Activated B cell treated with CpG ODN at 0.5 μM for 24 hours (primary cell): ENCODE measurements at regions of chr6 and their contacts with region 1.

Region 1: GRCh38 chr6:26122793-26123674 is 35.8 kb downstream of the HFE start:
- DNase-seq: peak; percentile 68
- ATAC-seq: peak; percentile 60
- H3K4me3 Mint-ChIP-seq: peak overlapping the region; percentile 94
- H3K27ac Mint-ChIP-seq: peak overlapping the region; percentile 99
- H3K4me1 Mint-ChIP-seq: peaks cover 34% of the 10 kb centered on the region
- H3K27me3 Mint-ChIP-seq: no peaks in the 10 kb centered on the region
- CTCF ChIP-seq: no peak

Region 2: GRCh38 chr6:26045065-26045927 is 77.7 kb before region 1 on chr6:
- CTCF ChIA-PET with region 1: interaction called, 3 read pairs
- POLR2A ChIA-PET with region 1: interaction called, 154 read pairs
- intact Hi-C with region 1: loop called (anchors 1 kb)
- DNase-seq: peak; percentile 51
- ATAC-seq: peak; percentile 58
- H3K4me3 Mint-ChIP-seq: peak overlapping the region; percentile 91
- H3K27ac Mint-ChIP-seq: peak overlapping the region; percentile 99
- H3K4me1 Mint-ChIP-seq: peaks cover 24% of the 10 kb centered on the region
- H3K27me3 Mint-ChIP-seq: no peaks in the 10 kb centered on the region
- CTCF ChIP-seq: no peak

Region 3: GRCh38 chr6:26103770-26104456 is 19.1 kb before region 1 on chr6:
- CTCF ChIA-PET with region 1: interaction called, 4 read pairs
- POLR2A ChIA-PET with region 1: interaction called, 253 read pairs
- intact Hi-C with region 1: loop called (anchors 1 kb)
- DNase-seq: peak; percentile 83
- ATAC-seq: peak; percentile 85
- H3K4me3 Mint-ChIP-seq: peak overlapping the region; percentile 85
- H3K27ac Mint-ChIP-seq: peak overlapping the region; percentile 98
- H3K4me1 Mint-ChIP-seq: peaks cover 12% of the 10 kb centered on the region
- H3K27me3 Mint-ChIP-seq: peaks cover 3% of the 10 kb centered on the region
- CTCF ChIP-seq: no peak

Region 4: GRCh38 chr6:26196846-26197648 is 74.0 kb after region 1 on chr6:
- CTCF ChIA-PET with region 1: interaction called, 5 read pairs
- POLR2A ChIA-PET with region 1: interaction called, 435 read pairs
- intact Hi-C with region 1: loop called (anchors 1 kb)
- DNase-seq: peak; percentile 63
- ATAC-seq: peak; percentile 53
- H3K4me3 Mint-ChIP-seq: peak overlapping the region; percentile 93
- H3K27ac Mint-ChIP-seq: peak overlapping the region; percentile 96
- H3K4me1 Mint-ChIP-seq: peaks cover 52% of the 10 kb centered on the region
- H3K27me3 Mint-ChIP-seq: no peaks in the 10 kb centered on the region
- CTCF ChIP-seq: no peak

Region 5: GRCh38 chr6:26249957-26250697 is 127.1 kb after region 1 on chr6:
- CTCF ChIA-PET with region 1: no interaction called
- POLR2A ChIA-PET with region 1: interaction called, 46 read pairs
- intact Hi-C with region 1: no loop called
- DNase-seq: peak; percentile 57
- ATAC-seq: peak; percentile 63
- H3K4me3 Mint-ChIP-seq: peak overlapping the region; percentile 94
- H3K27ac Mint-ChIP-seq: peak overlapping the region; percentile 90
- H3K4me1 Mint-ChIP-seq: peaks cover 36% of the 10 kb centered on the region
- H3K27me3 Mint-ChIP-seq: no peaks in the 10 kb centered on the region
- CTCF ChIP-seq: no peak

Region 6: DNA sequence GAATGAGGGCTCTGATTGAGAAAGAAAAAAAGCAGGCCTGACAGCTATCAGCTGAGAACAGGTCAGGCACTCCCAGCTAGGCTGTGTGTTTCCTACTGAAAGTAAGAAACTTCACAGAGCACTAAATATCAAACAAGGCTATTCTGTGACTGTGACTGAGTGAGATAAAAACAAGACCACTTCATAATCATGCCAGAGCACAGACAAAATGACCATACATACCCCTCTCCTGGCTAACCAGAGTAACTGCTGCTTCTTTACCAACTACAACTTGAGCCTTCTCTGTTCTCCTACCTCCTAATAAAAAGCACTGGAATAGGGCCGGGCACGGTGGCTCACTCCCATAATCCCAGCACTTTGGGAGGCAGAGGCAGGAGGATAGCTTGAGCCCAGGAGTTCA is 370.2 kb after region 1 on chr6:
- CTCF ChIA-PET with region 1: no interaction called
- POLR2A ChIA-PET with region 1: no interaction called
- intact Hi-C with region 1: no loop called
- DNase-seq: no peak
- ATAC-seq: peak; percentile 64
- H3K4me3 Mint-ChIP-seq: no peak overlapping the region
- H3K27ac Mint-ChIP-seq: no peak overlapping the region
- H3K4me1 Mint-ChIP-seq: peaks cover 7% of the 10 kb centered on the region
- H3K27me3 Mint-ChIP-seq: no peaks in the 10 kb centered on the region
- CTCF ChIP-seq: no peak

Region 7: GRCh38 chr6:27809939-27810767 is 1687.1 kb after region 1 on chr6:
- CTCF ChIA-PET with region 1: no interaction called
- POLR2A ChIA-PET with region 1: interaction called, 7 read pairs
- intact Hi-C with region 1: loop called (anchors 2 kb)
- DNase-seq: peak; percentile 68
- ATAC-seq: peak; percentile 59
- H3K4me3 Mint-ChIP-seq: peak overlapping the region; percentile 93
- H3K27ac Mint-ChIP-seq: peak overlapping the region; percentile 97
- H3K4me1 Mint-ChIP-seq: peaks cover 59% of the 10 kb centered on the region
- H3K27me3 Mint-ChIP-seq: no peaks in the 10 kb centered on the region
- CTCF ChIP-seq: no peak